ENCODE measurements at regions of chr20 and their contacts with region 1.

Region 1: GRCh38 chr20:36460648-36461599 is 80.4 kb upstream of the MYL9 start:
- DNase-seq: peak; percentile 87
- H3K4me3 ChIP-seq: peak overlapping the region; percentile 2 to 77 (median 50)
- H3K27ac ChIP-seq: peak overlapping the region; percentile 59
- H3K4me1 ChIP-seq: peaks cover 34% of the 10 kb centered on the region
- H3K27me3 ChIP-seq: no peaks in the 10 kb centered on the region
- CTCF ChIP-seq: no peak

Region 2: GRCh38 chr20:36499723-36500501 is 39.0 kb after region 1 on chr20:
- CTCF ChIA-PET with region 1: no interaction called
- dilution Hi-C with region 1: no loop called
- in situ Hi-C with region 1: no loop called
- intact Hi-C with region 1: loop called (anchors 5 kb)
- DNase-seq: no peak
- H3K4me3 ChIP-seq: no peak overlapping the region
- H3K27ac ChIP-seq: no peak overlapping the region
- H3K4me1 ChIP-seq: no peaks in the 10 kb centered on the region
- H3K27me3 ChIP-seq: no peaks in the 10 kb centered on the region
- CTCF ChIP-seq: no peak

Region 3: GRCh38 chr20:36541227-36541763 is 80.4 kb after region 1 on chr20 and contains the start of gene MYL9:
- CTCF ChIA-PET with region 1: no interaction called
- dilution Hi-C with region 1: no loop called
- in situ Hi-C with region 1: no loop called
- intact Hi-C with region 1: loop called (anchors 10 kb)
- DNase-seq: no peak
- H3K4me3 ChIP-seq: peak within 1 kb of the TSS in 2 of 3 experiments; percentile 24 to 54
- H3K27ac ChIP-seq: no peak within 1 kb of the TSS
- H3K4me1 ChIP-seq: peaks cover 10% of the 10 kb centered on the region
- H3K27me3 ChIP-seq: no peaks in the 10 kb centered on the region
- CTCF ChIP-seq: no peak
- total RNA-seq, gene MYL9: 29.4 to 138 TPM

Region 4: GRCh38 chr20:36792422-36792821 is 331.5 kb after region 1 on chr20:
- CTCF ChIA-PET with region 1: no interaction called
- dilution Hi-C with region 1: no loop called
- in situ Hi-C with region 1: no loop called
- intact Hi-C with region 1: no loop called
- DNase-seq: peak; percentile 31
- H3K4me3 ChIP-seq: no peak overlapping the region
- H3K27ac ChIP-seq: no peak overlapping the region
- H3K4me1 ChIP-seq: no peaks in the 10 kb centered on the region
- H3K27me3 ChIP-seq: no peaks in the 10 kb centered on the region
- CTCF ChIP-seq: peak; percentile 23 to 53